Endothelial cell of umbilical vein (primary cell): ENCODE measurements at regions of chr4 and their contacts with region 1.

Region 1: DNA sequence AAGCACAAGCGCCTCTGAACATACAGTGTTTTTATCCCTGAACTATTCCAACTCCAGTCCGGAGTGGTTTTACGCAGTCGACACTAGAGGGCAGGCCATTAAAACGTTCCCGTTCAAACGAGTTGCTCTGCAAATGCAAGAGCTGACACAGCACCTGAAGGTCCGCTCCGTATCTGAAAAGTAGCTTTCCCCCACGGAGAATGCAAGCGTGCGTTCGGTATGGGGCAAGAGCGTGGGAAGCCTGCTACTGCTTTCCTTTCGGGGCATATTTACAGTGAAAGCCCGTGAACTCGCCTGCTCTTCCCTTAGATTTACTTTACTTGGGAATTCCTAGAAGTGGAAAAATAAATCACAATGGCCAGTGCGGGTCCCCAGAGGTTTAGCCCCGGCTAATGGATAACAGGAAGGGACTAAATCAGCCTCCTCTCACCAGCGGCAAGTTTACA is 190.8 kb downstream of the TSPAN5 start:
- DNase-seq: peak; percentile 86
- H3K4me3 ChIP-seq: peak overlapping the region in 2 of 3 experiments; percentile 9 to 62
- H3K27ac ChIP-seq: no peak overlapping the region
- H3K4me1 ChIP-seq: peaks cover 17% of the 10 kb centered on the region
- H3K27me3 ChIP-seq: no peaks in the 10 kb centered on the region
- CTCF ChIP-seq: peak; percentile 78 to 83
- POLR2A ChIP-seq: no peak

Region 2: DNA sequence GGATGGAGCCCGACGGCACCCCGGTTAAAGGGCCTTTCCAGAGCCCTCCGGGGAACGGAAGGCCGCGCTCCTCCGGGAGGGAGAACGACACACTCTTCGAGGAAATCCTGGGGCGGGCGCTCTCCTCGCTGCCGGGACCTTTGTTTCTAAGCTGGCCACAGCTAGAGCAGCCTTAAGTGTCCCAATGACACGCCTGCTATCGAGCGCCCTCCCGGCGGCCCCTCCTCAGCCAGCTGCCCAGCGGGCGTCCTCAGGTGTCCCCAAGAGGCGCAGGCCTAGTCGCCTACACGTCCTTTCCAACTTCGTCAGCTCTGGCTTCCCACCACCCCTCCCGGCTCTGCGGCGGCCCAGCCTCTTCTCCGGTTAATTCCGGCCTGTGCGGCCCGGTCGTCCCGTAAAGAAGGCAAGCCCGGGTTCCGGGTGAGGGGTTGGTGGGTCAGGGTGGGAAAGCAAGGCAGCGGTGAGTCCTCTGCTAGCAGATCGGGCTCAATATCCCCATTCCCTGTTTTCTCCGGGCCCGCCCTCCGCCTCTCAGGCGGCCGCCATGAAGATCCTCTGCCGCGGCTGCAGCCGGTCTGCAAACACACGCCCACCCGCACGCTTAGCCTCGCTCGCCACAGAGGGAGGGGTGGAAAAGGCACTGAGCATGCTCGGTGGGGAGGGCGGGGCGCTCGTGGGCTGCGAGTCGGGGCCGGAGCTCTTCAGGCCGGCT is 206.9 kb before region 1 on chr4:
- CTCF ChIA-PET with region 1: interaction called, 11 read pairs
- POLR2A ChIA-PET with region 1: no interaction called
- dilution Hi-C with region 1: no loop called
- intact Hi-C with region 1: loop called (anchors 5 kb)
- DNase-seq: peak; percentile 98
- H3K4me3 ChIP-seq: peak overlapping the region; percentile 73 to 76 (median 73)
- H3K27ac ChIP-seq: peak overlapping the region; percentile 86
- H3K4me1 ChIP-seq: peaks cover 22% of the 10 kb centered on the region
- H3K27me3 ChIP-seq: no peaks in the 10 kb centered on the region
- CTCF ChIP-seq: no peak
- POLR2A ChIP-seq: peak; percentile 94

Region 3: GRCh38 chr4:98546910-98547594 is 79.4 kb after region 1 on chr4:
- CTCF ChIA-PET with region 1: interaction called, 13 read pairs
- POLR2A ChIA-PET with region 1: no interaction called
- dilution Hi-C with region 1: no loop called
- intact Hi-C with region 1: no loop called
- DNase-seq: peak; percentile 59
- H3K4me3 ChIP-seq: peak overlapping the region in 2 of 3 experiments; percentile 3 to 18
- H3K27ac ChIP-seq: no peak overlapping the region
- H3K4me1 ChIP-seq: peaks cover 17% of the 10 kb centered on the region
- H3K27me3 ChIP-seq: no peaks in the 10 kb centered on the region
- CTCF ChIP-seq: peak in 1 of 2 donors; percentile 5
- POLR2A ChIP-seq: no peak

Region 4: GRCh38 chr4:98688411-98689290 is 221.0 kb after region 1 on chr4:
- CTCF ChIA-PET with region 1: interaction called, 23 read pairs
- POLR2A ChIA-PET with region 1: no interaction called
- dilution Hi-C with region 1: no loop called
- intact Hi-C with region 1: no loop called
- DNase-seq: peak; percentile 90
- H3K4me3 ChIP-seq: peak overlapping the region in 1 of 3 experiments; percentile 34
- H3K27ac ChIP-seq: peak overlapping the region; percentile 85
- H3K4me1 ChIP-seq: peaks cover 59% of the 10 kb centered on the region
- H3K27me3 ChIP-seq: no peaks in the 10 kb centered on the region
- CTCF ChIP-seq: no peak
- POLR2A ChIP-seq: no peak

Region 5: DNA sequence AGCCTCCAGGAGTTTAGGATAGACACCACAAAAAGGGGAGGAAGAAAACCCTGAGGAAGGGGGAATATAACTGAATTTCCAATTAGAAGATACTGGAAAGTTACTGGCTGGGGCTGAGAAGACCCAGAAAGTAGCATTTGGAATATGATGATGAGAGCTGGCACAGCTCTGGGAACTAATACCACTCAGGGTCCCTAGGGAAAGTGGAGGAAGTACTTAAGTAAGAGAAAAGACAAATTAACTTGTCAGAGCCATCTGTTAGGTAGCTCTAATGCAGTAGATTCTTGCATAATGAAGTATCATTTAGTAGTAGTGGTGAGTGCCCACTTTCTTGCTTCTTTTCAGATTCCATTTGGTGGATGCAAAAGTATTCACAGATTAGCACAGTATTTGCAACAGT is 281.6 kb after region 1 on chr4:
- CTCF ChIA-PET with region 1: no interaction called
- POLR2A ChIA-PET with region 1: no interaction called
- dilution Hi-C with region 1: no loop called
- intact Hi-C with region 1: no loop called
- DNase-seq: no peak
- H3K4me3 ChIP-seq: no peak overlapping the region
- H3K27ac ChIP-seq: no peak overlapping the region
- H3K4me1 ChIP-seq: peaks cover 14% of the 10 kb centered on the region
- H3K27me3 ChIP-seq: no peaks in the 10 kb centered on the region
- CTCF ChIP-seq: no peak
- POLR2A ChIP-seq: no peak

Region 6: GRCh38 chr4:98828801-98829200 is 361.2 kb after region 1 on chr4:
- CTCF ChIA-PET with region 1: interaction called, 4 read pairs
- POLR2A ChIA-PET with region 1: no interaction called
- dilution Hi-C with region 1: no loop called
- intact Hi-C with region 1: loop called (anchors 2 kb)
- DNase-seq: no peak
- H3K4me3 ChIP-seq: no peak overlapping the region
- H3K27ac ChIP-seq: no peak overlapping the region
- H3K4me1 ChIP-seq: peaks cover 12% of the 10 kb centered on the region
- H3K27me3 ChIP-seq: no peaks in the 10 kb centered on the region
- CTCF ChIP-seq: no peak
- POLR2A ChIP-seq: no peak

Region 7: DNA sequence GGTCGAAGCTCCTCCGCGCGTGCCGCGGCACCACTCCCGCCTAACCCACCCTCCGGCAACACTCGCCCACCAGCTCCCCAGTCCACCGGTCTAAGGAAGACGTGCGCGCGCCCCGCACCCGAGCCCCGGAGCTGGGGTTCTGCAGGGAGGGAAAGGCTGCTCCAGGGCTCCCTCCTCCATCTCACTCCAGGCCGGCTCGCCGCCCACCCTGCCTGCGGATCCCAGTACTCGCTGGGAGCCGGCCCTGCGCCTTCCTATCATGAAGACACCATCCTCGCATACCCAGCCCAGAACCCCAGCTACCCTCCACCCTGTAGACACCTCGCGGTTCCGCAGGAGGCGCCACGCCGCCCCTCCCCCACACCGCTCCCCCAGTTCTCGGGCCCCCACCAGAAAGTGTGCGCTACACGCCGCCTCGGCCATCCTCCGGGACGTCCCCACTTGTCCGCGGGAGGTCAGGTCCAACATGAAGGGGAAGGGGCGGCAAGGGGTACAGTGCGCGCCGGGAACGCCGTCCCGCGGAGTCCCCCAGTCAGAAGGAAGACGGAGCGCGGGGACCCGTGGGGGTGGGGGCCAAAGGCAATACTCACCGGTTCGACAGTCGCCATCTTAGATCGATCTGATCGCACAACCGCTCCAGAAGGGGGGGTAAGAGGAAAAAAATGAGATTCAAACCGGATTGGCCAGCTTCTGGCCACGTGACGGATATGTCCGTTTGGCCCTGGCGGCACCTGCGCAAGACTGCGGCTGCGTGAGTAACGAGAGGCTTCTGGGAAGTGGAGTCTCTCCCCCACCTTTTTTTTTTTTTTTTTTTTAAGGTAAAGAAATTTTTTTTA is 461.1 kb after region 1 on chr4 and contains the start of gene EIF4E:
- CTCF ChIA-PET with region 1: interaction called, 15 read pairs
- POLR2A ChIA-PET with region 1: no interaction called
- dilution Hi-C with region 1: no loop called
- intact Hi-C with region 1: loop called (anchors 2 kb)
- DNase-seq: peak; percentile 99
- H3K4me3 ChIP-seq: peak within 1 kb of the TSS; percentile 91 to 95 (median 91)
- H3K27ac ChIP-seq: peak within 1 kb of the TSS; percentile 93
- H3K4me1 ChIP-seq: peaks cover 32% of the 10 kb centered on the region
- H3K27me3 ChIP-seq: no peaks in the 10 kb centered on the region
- CTCF ChIP-seq: peak in 1 of 2 donors; percentile 26
- POLR2A ChIP-seq: peak; percentile 81
- total RNA-seq, gene EIF4E: 103 and 107 TPM in 2 replicates

Region 8: GRCh38 chr4:99405433-99406115 is 937.9 kb after region 1 on chr4:
- CTCF ChIA-PET with region 1: interaction called, 15 read pairs
- POLR2A ChIA-PET with region 1: no interaction called
- dilution Hi-C with region 1: no loop called
- intact Hi-C with region 1: loop called (anchors 1 kb)
- DNase-seq: peak; percentile 70
- H3K4me3 ChIP-seq: no peak overlapping the region
- H3K27ac ChIP-seq: no peak overlapping the region
- H3K4me1 ChIP-seq: peaks cover 5% of the 10 kb centered on the region
- H3K27me3 ChIP-seq: peaks cover 4 to 15% of the 10 kb centered on the region in 2 experiments
- CTCF ChIP-seq: peak; percentile 75 to 78
- POLR2A ChIP-seq: no peak